ENCODE measurements at regions of chr14 and their contacts with region 1.

Region 1: GRCh38 chr14:23057757-23058653 is 685 bp upstream of the CDH24 start:
- DNase-seq: peak; percentile 93
- ATAC-seq: peak; percentile 81
- H3K4me3 Mint-ChIP-seq: peak overlapping the region; percentile 74
- H3K27ac Mint-ChIP-seq: no peak overlapping the region
- H3K4me1 Mint-ChIP-seq: peaks cover 15% of the 10 kb centered on the region
- H3K27me3 Mint-ChIP-seq: no peaks in the 10 kb centered on the region

Region 2: DNA sequence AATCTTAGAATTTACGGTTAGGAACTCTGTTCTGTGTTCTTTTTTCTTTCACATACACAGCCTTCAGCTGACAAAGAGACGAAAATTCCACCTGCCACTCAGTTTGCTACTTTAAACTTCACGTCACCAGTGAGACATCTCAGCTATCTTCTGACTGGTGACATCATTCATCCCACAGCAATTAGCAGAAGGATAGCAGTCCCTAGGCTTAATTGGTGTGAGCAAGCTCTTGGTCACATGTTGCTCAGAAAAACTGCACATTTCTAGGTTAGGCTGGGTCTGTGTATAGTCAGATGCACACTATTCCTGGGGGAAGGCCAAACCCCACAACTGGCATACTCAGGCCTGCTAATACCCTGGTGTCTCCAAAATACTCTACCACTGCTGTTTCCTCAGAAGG is 266.7 kb before region 1 on chr14:
- CTCF ChIA-PET with region 1: no interaction called
- POLR2A ChIA-PET with region 1: no interaction called
- intact Hi-C with region 1: no loop called
- DNase-seq: no peak
- ATAC-seq: no peak
- H3K4me3 Mint-ChIP-seq: no peak overlapping the region
- H3K27ac Mint-ChIP-seq: no peak overlapping the region
- H3K4me1 Mint-ChIP-seq: peaks cover 12% of the 10 kb centered on the region
- H3K27me3 Mint-ChIP-seq: peaks cover 5% of the 10 kb centered on the region

Region 3: DNA sequence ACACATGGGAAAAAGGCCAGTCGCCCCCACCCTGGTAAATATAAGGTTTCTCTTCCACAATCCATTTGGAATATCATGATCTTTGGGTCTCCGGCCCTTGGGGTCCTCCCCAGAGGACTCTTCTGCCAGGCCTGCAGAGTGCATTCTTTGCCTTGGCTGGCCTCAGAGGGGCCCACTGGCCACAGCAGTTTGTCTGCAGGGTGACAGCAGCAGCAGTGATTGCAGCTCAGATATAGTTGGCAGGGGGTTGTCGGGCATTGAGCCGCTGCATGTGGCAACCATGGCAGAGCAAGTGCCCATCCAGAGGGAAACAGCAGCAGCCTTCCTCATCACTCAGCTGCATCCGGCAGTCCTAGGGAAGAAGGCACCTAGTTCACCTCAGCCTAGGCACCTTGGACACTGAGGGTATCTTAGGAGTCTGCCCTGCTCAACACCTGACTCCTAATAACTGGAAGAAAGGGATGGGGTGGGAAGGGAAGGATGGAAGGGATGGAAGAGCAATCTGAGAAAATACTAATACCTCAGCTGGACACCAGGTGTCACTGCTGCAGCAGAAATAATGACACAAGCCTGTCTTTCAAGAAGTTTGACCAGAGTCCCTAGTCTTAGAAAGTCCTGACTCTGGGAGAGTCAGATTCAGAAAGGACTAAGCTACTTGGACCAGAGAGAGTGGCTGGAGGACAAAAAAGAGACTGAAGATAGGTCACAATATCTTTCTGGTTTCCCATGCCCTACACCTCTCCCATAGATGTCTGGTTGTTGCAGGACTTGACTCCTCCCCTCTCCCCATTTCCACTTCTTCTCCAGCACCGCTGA is 84.6 kb before region 1 on chr14:
- CTCF ChIA-PET with region 1: interaction called, 72 read pairs
- POLR2A ChIA-PET with region 1: no interaction called
- intact Hi-C with region 1: loop called in 1 of 2 experiments (anchors 1 kb)
- DNase-seq: peak; percentile 56
- ATAC-seq: peak; percentile 71
- H3K4me3 Mint-ChIP-seq: no peak overlapping the region
- H3K27ac Mint-ChIP-seq: no peak overlapping the region
- H3K4me1 Mint-ChIP-seq: no peaks in the 10 kb centered on the region
- H3K27me3 Mint-ChIP-seq: no peaks in the 10 kb centered on the region

Region 4: DNA sequence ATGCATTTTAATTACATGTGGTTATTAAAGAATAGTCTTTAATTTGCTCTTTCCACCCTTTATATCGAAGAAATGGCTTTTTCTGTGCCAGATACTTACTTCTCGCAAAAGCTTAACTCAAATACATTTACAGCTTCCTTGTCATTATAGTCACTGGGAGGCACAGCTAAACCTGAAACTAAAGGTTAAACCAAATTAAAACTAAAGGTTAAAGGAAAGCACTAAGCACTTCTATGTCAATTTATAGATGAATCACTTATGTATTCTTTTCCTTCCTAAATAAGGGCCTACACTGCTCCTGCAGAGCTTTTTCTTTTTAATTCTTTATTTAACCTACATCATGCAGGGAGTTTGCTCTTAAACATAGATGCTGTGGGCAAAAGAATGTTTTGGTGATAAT is 57.1 kb before region 1 on chr14:
- CTCF ChIA-PET with region 1: interaction called, 751 read pairs
- POLR2A ChIA-PET with region 1: interaction called, 4 read pairs
- intact Hi-C with region 1: loop called in 1 of 2 experiments (anchors 5 kb)
- DNase-seq: no peak
- ATAC-seq: peak; percentile 72
- H3K4me3 Mint-ChIP-seq: no peak overlapping the region
- H3K27ac Mint-ChIP-seq: no peak overlapping the region
- H3K4me1 Mint-ChIP-seq: peaks cover 12% of the 10 kb centered on the region
- H3K27me3 Mint-ChIP-seq: no peaks in the 10 kb centered on the region

Region 5: GRCh38 chr14:23025151-23025814 is 32.7 kb before region 1 on chr14:
- CTCF ChIA-PET with region 1: interaction called, 13 read pairs
- POLR2A ChIA-PET with region 1: interaction called, 3 read pairs
- intact Hi-C with region 1: no loop called
- DNase-seq: peak; percentile 70
- ATAC-seq: peak; percentile 58
- H3K4me3 Mint-ChIP-seq: peak overlapping the region; percentile 37
- H3K27ac Mint-ChIP-seq: peak overlapping the region; percentile 90
- H3K4me1 Mint-ChIP-seq: peaks cover 72% of the 10 kb centered on the region
- H3K27me3 Mint-ChIP-seq: no peaks in the 10 kb centered on the region

Region 6: DNA sequence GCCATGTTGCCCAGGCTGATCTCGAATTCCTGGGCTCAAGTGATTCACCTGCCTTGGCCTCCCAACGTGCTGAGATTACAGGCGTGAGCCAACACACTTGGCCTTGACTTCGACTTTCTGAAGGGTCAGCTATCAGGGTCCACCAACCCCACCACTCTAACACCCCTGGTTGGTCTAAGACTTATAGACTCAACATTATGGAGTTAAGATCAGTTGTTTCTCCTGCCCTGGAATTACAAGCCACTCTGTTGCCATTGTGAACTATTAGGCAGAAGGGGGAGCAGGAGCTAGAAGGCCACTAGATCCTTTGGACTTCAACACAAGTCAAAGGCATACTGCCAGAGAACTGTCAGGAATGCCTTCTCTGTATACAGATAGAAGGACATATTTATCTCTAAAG is 17.9 kb before region 1 on chr14:
- CTCF ChIA-PET with region 1: interaction called, 15 read pairs
- POLR2A ChIA-PET with region 1: interaction called, 6 read pairs
- intact Hi-C with region 1: loop called in 1 of 2 experiments (anchors 1 kb)
- DNase-seq: no peak
- ATAC-seq: no peak
- H3K4me3 Mint-ChIP-seq: no peak overlapping the region
- H3K27ac Mint-ChIP-seq: no peak overlapping the region
- H3K4me1 Mint-ChIP-seq: peaks cover 9% of the 10 kb centered on the region
- H3K27me3 Mint-ChIP-seq: no peaks in the 10 kb centered on the region

Region 7: DNA sequence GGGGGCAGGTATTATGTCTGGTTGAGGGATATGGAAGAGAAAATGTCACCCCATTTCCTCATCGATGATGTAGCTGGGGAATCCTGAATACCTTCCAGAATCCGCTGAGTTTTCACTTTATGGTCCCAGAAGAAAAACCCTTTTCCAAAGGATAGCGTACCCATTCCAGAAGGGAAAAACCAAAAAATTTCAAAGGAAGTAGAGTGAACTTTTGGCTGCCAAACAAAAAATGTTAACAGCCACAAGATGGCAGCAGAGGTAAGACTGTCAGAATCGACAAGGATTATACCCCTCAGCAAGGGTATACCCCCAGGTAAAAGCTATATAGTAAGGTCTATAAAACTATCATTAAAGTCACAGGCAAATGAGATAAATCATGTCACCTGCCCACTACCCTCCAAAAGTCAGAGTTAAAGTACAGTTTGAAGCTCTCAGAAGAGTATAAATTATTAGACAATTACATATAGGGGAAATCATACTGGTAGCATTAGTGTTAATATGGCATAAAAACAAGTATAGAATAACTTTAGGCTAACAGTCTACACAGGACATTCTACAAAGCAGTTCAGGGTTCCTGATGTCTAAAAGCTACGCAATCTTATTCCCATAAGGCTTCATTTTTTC is 18.9 kb after region 1 on chr14:
- CTCF ChIA-PET with region 1: interaction called, 34 read pairs
- POLR2A ChIA-PET with region 1: interaction called, 3 read pairs
- intact Hi-C with region 1: no loop called
- DNase-seq: peak; percentile 46
- ATAC-seq: peak; percentile 59
- H3K4me3 Mint-ChIP-seq: no peak overlapping the region
- H3K27ac Mint-ChIP-seq: peak overlapping the region; percentile 17
- H3K4me1 Mint-ChIP-seq: peaks cover 5% of the 10 kb centered on the region
- H3K27me3 Mint-ChIP-seq: no peaks in the 10 kb centered on the region